Transverse colon (tissue), 4 donors: ENCODE measurements at regions of chrX and their contacts with region 1.

Region 1: DNA sequence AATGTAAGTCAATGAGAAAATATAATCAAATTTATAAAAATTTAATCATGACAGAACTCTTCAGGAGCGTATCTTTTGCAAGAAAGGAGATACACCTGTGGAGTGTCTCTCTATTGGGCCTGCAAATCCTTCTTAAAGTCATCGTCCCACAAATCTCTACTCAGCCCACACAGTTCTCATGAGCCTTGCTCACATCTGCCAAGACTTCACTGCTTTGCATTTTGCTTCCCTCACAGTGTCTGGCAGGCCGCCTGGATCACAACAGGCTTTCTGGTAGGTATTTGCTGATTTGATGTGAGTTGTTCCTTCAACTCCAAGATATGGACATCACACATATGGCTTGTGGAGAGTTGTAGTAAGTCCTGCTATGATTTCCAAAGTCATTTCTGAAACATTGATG is 183.1 kb upstream of the ARX start:
- DNase-seq: no peak
- H3K4me3 ChIP-seq: no peak overlapping the region
- H3K27ac ChIP-seq: no peak overlapping the region
- H3K4me1 ChIP-seq: no peaks in the 10 kb centered on the region
- H3K27me3 ChIP-seq: no peaks in the 10 kb centered on the region
- CTCF ChIP-seq: no peak
- EP300 ChIP-seq: no peak
- POLR2A ChIP-seq: no peak

Region 2: GRCh38 chrX:25226151-25226550 is 27.3 kb after region 1 on chrX:
- in situ Hi-C with region 1: no loop called
- intact Hi-C with region 1: loop called (anchors 1 kb)
- DNase-seq: no peak
- H3K4me3 ChIP-seq: no peak overlapping the region
- H3K27ac ChIP-seq: no peak overlapping the region
- H3K4me1 ChIP-seq: no peaks in the 10 kb centered on the region
- H3K27me3 ChIP-seq: no peaks in the 10 kb centered on the region
- CTCF ChIP-seq: no peak
- EP300 ChIP-seq: no peak
- POLR2A ChIP-seq: no peak